ENCODE measurements at regions of chr12 and their contacts with region 1.

Region 1: DNA sequence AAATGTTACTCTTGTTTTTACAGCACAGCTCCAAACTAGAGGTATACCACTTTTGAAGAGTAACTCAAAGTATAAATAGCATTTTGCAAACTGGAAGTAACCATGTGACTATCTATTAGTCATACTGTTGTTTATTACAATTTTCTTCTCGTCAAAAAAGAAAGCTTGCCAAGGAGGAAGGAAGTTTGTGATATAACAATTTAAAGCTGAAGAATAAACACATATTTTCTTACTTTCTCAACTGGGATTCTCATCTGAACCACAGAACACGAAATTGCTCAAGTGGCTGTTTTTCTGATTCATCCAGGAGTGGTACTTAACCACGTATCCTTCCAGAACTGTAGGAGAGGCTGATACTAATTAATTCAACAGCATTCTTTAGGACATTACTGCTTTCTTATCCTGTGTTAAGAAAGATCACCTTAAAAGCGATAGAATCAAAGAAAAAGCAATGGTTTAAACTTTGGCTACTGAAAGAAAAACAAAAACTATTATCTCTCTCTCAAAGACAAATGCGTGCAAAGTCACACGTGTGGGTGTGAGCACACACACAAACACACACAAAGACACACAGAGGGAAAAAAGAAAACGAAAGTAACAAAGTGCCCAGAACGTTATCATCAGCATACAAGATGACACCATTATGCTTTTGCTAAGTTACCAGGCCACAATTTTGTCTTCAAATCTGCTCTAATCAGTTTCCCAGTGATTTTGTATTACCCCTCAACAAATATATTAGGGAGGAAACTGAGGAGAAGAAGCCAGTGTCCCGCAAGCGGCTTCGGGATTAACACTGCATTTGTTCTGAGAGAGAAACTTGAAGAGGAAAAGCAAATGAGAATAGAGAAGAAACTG is at the start of gene CLEC2B:
- DNase-seq: peak in 1 of 2 donors; percentile 80
- ATAC-seq: peak; percentile 74 to 86 (median 74)
- H3K4me3 ChIP-seq: peak within 1 kb of the TSS; percentile 99
- H3K4me3 Mint-ChIP-seq: peak within 1 kb of the TSS; percentile 98
- H3K27ac ChIP-seq: peak within 1 kb of the TSS; percentile 99
- H3K27ac Mint-ChIP-seq: peak within 1 kb of the TSS; percentile 98 to 100
- H3K4me1 ChIP-seq: peaks cover 9% of the 10 kb centered on the region
- H3K4me1 Mint-ChIP-seq: peaks cover 38 to 43% of the 10 kb centered on the region in 2 donors
- H3K27me3 ChIP-seq: no peaks in the 10 kb centered on the region
- H3K27me3 Mint-ChIP-seq: no peaks in the 10 kb centered on the region
- CTCF ChIP-seq: no peak
- total RNA-seq, gene CLEC2B: 158 to 302 (median 220) TPM

Region 2: GRCh38 chr12:9760699-9761418 is 108.7 kb before region 1 on chr12 and contains the start of gene CD69:
- intact Hi-C with region 1: loop called (anchors 1 kb)
- DNase-seq: peak; percentile 71 to 96
- ATAC-seq: peak; percentile 54 to 80 (median 73)
- H3K4me3 ChIP-seq: peak within 1 kb of the TSS; percentile 55
- H3K4me3 Mint-ChIP-seq: peak within 1 kb of the TSS; percentile 99
- H3K27ac ChIP-seq: peak within 1 kb of the TSS; percentile 100
- H3K27ac Mint-ChIP-seq: peak within 1 kb of the TSS; percentile 93 to 100
- H3K4me1 ChIP-seq: peaks cover 28% of the 10 kb centered on the region
- H3K4me1 Mint-ChIP-seq: peaks cover 78 to 84% of the 10 kb centered on the region in 2 donors
- H3K27me3 ChIP-seq: no peaks in the 10 kb centered on the region
- H3K27me3 Mint-ChIP-seq: no peaks in the 10 kb centered on the region
- CTCF ChIP-seq: no peak
- total RNA-seq, gene CD69: 739 to 1,541 (median 990) TPM

Region 3: DNA sequence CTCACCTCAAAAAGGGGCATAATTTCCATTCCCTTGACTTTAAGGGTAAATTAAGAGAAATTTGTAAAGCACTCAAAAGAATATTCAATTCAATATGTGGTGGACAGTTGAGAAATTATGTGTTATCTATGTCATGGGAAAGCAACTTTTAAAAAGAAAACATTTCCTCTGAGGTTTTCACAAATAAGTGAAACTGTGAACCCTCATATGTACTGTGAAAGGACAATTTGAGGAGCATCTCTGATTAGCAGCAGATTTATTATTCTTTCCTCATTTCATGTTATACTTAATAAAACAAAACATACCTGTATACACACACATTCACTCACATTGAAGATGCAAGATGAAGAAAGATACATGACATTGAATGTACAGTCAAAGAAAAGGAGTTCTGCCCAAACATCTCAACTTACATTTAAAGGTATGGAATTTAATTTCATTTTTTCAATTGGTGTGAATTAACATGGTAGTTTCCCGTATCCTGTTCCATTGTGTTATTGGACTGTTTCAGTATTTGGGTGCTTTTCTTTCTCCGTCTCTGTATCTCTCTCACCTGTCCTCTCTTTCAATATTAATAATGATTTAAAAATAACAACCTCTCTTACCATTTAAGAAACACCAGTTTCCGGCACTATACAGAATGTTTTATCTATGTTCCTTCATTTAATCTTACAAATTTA is 42.2 kb before region 1 on chr12 and contains the start of gene KLRF1:
- intact Hi-C with region 1: loop called (anchors 1 kb)
- DNase-seq: peak in 1 of 2 donors; percentile 24
- ATAC-seq: peak; percentile 66 to 84 (median 81)
- H3K4me3 ChIP-seq: peak within 1 kb of the TSS; percentile 88
- H3K4me3 Mint-ChIP-seq: peak within 1 kb of the TSS; percentile 100
- H3K27ac ChIP-seq: peak within 1 kb of the TSS; percentile 85
- H3K27ac Mint-ChIP-seq: peak within 1 kb of the TSS in 1 of 2 donors; percentile 91
- H3K4me1 ChIP-seq: peaks cover 3% of the 10 kb centered on the region
- H3K4me1 Mint-ChIP-seq: peaks cover 42% of the 10 kb centered on the region in 2 donors
- H3K27me3 ChIP-seq: no peaks in the 10 kb centered on the region
- H3K27me3 Mint-ChIP-seq: no peaks in the 10 kb centered on the region
- CTCF ChIP-seq: no peak
- total RNA-seq, gene KLRF1: 364 to 424 (median 392) TPM

Region 4: DNA sequence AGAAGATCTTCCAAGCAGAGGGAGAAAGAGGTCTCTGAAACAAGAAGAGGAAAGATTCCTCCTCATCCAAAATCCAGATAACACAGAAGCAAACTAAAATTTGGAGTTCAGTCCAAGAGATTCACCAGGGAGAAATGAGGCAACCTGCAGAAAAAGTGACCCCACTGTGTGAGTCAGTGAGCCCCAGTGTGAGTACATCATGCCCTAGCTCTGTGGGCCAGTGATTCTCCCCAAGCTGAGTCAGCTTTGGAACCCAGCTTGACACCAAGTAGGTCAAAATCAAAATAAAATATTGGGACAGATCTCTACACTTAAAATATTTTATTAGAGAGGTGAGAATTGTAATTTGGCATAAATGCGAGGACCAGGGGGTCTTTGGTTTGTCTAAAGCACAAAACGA is 17.6 kb before region 1 on chr12:
- intact Hi-C with region 1: loop called (anchors 2 kb)
- DNase-seq: no peak
- ATAC-seq: peak in 2 of 3 donors; percentile 26 to 68
- H3K4me3 ChIP-seq: no peak overlapping the region
- H3K4me3 Mint-ChIP-seq: peak overlapping the region; percentile 57
- H3K27ac ChIP-seq: peak overlapping the region; percentile 1
- H3K27ac Mint-ChIP-seq: peak overlapping the region; percentile 82 to 92
- H3K4me1 ChIP-seq: peaks cover 16% of the 10 kb centered on the region
- H3K4me1 Mint-ChIP-seq: peaks cover 80 to 84% of the 10 kb centered on the region in 2 donors
- H3K27me3 ChIP-seq: no peaks in the 10 kb centered on the region
- H3K27me3 Mint-ChIP-seq: no peaks in the 10 kb centered on the region
- CTCF ChIP-seq: no peak

Region 5: DNA sequence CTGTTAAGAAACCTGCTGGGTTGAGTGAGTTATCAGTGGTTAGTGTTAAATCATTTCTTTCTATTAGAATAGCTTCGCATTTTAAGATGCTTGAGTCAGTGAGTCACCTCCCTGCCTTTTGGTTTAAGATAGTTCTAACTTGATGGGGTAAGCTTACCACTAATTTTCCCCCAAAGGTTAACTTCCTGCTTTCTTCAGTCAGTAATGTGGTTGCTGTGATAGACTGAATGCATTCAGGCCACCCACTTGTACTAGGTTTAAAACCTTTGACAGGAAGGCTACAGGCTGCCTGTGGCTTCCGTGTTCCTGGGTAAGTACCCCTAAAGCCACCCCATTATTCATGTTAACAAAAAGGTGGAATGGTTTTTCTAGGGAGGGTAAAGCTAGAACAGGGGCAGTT is 37.3 kb after region 1 on chr12:
- intact Hi-C with region 1: loop called (anchors 5 kb)
- DNase-seq: peak in 1 of 2 donors; percentile 76
- ATAC-seq: peak; percentile 90 to 99 (median 94)
- H3K4me3 ChIP-seq: no peak overlapping the region
- H3K4me3 Mint-ChIP-seq: peak overlapping the region; percentile 72
- H3K27ac ChIP-seq: no peak overlapping the region
- H3K27ac Mint-ChIP-seq: peak overlapping the region; percentile 60 to 80
- H3K4me1 ChIP-seq: peaks cover 3% of the 10 kb centered on the region
- H3K4me1 Mint-ChIP-seq: peaks cover 31 to 32% of the 10 kb centered on the region in 2 donors
- H3K27me3 ChIP-seq: no peaks in the 10 kb centered on the region
- H3K27me3 Mint-ChIP-seq: no peaks in the 10 kb centered on the region
- CTCF ChIP-seq: no peak

Region 6: DNA sequence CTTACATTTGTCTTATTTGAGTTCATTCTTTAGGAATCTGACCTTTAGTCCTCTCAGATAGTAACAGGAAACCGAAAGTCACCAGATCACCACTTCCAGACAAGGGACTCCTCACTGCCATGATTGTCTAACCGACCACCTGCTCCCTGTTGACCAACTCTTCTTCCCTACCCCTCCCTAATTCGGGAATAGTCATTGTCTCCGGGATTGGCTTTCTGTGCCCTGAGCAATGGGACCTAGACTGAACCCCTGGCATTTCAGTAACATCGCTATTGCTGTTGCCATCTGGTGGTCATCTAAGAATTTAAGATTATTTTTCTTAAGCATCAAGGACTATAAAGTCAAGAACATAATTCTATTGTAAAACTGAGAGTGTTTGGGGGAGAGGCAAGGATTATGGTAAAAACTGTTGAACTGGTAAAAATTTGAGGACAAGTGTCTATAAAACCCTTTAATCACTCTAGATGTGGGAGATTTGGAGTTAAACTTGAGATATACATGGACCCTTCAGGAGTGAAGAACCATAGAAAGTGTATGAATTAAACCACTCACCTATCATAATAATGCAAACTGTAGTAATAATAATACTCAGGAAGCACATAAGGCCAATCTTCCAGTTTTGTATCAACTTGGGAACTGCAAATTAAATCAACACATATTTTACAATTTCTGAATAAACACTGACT is 56.3 kb after region 1 on chr12:
- intact Hi-C with region 1: no loop called
- DNase-seq: peak in 1 of 2 donors; percentile 73
- ATAC-seq: peak; percentile 66 to 75 (median 72)
- H3K4me3 ChIP-seq: no peak overlapping the region
- H3K4me3 Mint-ChIP-seq: peak overlapping the region; percentile 83
- H3K27ac ChIP-seq: no peak overlapping the region
- H3K27ac Mint-ChIP-seq: peak overlapping the region; percentile 64 to 76
- H3K4me1 ChIP-seq: peaks cover 2% of the 10 kb centered on the region
- H3K4me1 Mint-ChIP-seq: peaks cover 5 to 7% of the 10 kb centered on the region in 2 donors
- H3K27me3 ChIP-seq: no peaks in the 10 kb centered on the region
- H3K27me3 Mint-ChIP-seq: peaks cover 6 to 11% of the 10 kb centered on the region in 2 donors
- CTCF ChIP-seq: peak; percentile 55

Region 7: GRCh38 chr12:10252201-10252600 is 382.7 kb after region 1 on chr12:
- intact Hi-C with region 1: no loop called
- DNase-seq: no peak
- ATAC-seq: no peak
- H3K4me3 ChIP-seq: no peak overlapping the region
- H3K4me3 Mint-ChIP-seq: no peak overlapping the region
- H3K27ac ChIP-seq: no peak overlapping the region
- H3K27ac Mint-ChIP-seq: peak overlapping the region; percentile 95 to 96
- H3K4me1 ChIP-seq: peaks cover 36% of the 10 kb centered on the region
- H3K4me1 Mint-ChIP-seq: peaks cover 49 to 56% of the 10 kb centered on the region in 2 donors
- H3K27me3 ChIP-seq: no peaks in the 10 kb centered on the region
- H3K27me3 Mint-ChIP-seq: no peaks in the 10 kb centered on the region
- CTCF ChIP-seq: no peak

Region 8: GRCh38 chr12:10395390-10395998 is 526.0 kb after region 1 on chr12:
- intact Hi-C with region 1: loop called (anchors 5 kb)
- DNase-seq: peak in 1 of 2 donors; percentile 75
- ATAC-seq: peak; percentile 52 to 82 (median 75)
- H3K4me3 ChIP-seq: peak overlapping the region; percentile 5
- H3K4me3 Mint-ChIP-seq: peak overlapping the region; percentile 87
- H3K27ac ChIP-seq: peak overlapping the region; percentile 92
- H3K27ac Mint-ChIP-seq: peak overlapping the region; percentile 97 to 98
- H3K4me1 ChIP-seq: peaks cover 42% of the 10 kb centered on the region
- H3K4me1 Mint-ChIP-seq: peaks cover 63 to 68% of the 10 kb centered on the region in 2 donors
- H3K27me3 ChIP-seq: no peaks in the 10 kb centered on the region
- H3K27me3 Mint-ChIP-seq: no peaks in the 10 kb centered on the region
- CTCF ChIP-seq: no peak

Measured in natural killer cell (primary cell).